Psoas muscle (tissue), 8 donors: ENCODE measurements at regions of chr9 and their contacts with region 1.

Region 1: GRCh38 chr9:385818-386398 is 171.2 kb downstream of the DOCK8 start:
- DNase-seq: no peak
- ATAC-seq: peak; percentile 83 to 87 (median 85)
- H3K4me3 ChIP-seq: no peak overlapping the region
- H3K27ac ChIP-seq: no peak overlapping the region
- H3K4me1 ChIP-seq: no peaks in the 10 kb centered on the region
- H3K27me3 ChIP-seq: no peaks in the 10 kb centered on the region
- CTCF ChIP-seq: peak; percentile 84

Region 2: GRCh38 chr9:551986-552929 is 166.3 kb after region 1 on chr9:
- intact Hi-C with region 1: loop called in 1 of 2 experiments (anchors 10 kb)
- DNase-seq: no peak
- ATAC-seq: no peak
- H3K4me3 ChIP-seq: no peak overlapping the region
- H3K27ac ChIP-seq: no peak overlapping the region
- H3K4me1 ChIP-seq: peaks cover 2% of the 10 kb centered on the region
- H3K27me3 ChIP-seq: no peaks in the 10 kb centered on the region
- CTCF ChIP-seq: no peak

Region 3: DNA sequence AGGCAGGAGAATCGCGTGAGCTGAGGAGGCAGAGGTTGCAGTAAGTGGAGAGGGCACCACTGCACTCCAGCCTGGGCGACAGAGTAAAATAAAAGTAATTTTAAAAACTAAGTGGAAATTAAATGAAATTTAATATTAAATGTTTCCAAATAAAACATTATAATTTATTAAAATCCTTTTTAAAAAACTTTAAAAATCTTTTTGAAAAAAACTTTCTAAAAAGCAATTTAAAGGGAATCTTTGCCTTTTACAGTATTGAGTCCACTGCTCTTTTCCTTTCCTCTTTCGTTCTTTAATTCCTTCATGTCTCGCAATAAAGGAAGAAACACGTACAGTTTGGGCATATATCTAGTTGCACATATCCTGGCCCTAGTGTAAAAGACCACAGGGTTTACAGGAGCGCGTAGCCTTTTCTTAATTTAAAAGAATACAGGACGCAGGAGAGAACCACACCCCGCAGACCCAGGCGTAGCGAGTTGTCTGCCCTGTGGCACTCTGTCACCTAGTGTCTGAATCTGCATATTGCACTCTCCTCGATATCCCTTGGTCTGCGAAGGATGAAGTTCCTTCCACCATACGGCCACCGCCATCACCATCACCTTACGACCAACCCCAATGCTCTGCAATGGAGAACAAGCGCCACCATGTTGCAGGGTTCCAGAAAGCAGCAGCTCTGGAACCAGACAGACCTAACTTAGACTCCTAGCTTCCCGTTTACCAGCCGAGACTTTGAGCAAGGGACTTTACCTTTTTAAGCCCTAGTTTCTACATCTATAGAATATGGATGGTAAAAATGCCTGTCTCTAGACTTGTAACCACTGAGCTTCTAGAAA is 378.0 kb after region 1 on chr9:
- intact Hi-C with region 1: loop called in 1 of 2 experiments (anchors 5 kb)
- DNase-seq: peak; percentile 41 to 77
- ATAC-seq: peak; percentile 96 to 100 (median 98)
- H3K4me3 ChIP-seq: peak overlapping the region; percentile 52
- H3K27ac ChIP-seq: no peak overlapping the region
- H3K4me1 ChIP-seq: peaks cover 3% of the 10 kb centered on the region
- H3K27me3 ChIP-seq: peaks cover 0 to 2% (median 0%) of the 10 kb centered on the region in 3 donors
- CTCF ChIP-seq: peak; percentile 97

Region 4: GRCh38 chr9:806285-807156 is 420.6 kb after region 1 on chr9:
- intact Hi-C with region 1: loop called in 1 of 2 experiments (anchors 5 kb)
- DNase-seq: no peak
- ATAC-seq: peak in 1 of 4 donors; percentile 54
- H3K4me3 ChIP-seq: no peak overlapping the region
- H3K27ac ChIP-seq: no peak overlapping the region
- H3K4me1 ChIP-seq: no peaks in the 10 kb centered on the region
- H3K27me3 ChIP-seq: no peaks in the 10 kb centered on the region
- CTCF ChIP-seq: peak; percentile 66